ENCODE measurements at regions of chr12 and their contacts with region 1.

Region 1: DNA sequence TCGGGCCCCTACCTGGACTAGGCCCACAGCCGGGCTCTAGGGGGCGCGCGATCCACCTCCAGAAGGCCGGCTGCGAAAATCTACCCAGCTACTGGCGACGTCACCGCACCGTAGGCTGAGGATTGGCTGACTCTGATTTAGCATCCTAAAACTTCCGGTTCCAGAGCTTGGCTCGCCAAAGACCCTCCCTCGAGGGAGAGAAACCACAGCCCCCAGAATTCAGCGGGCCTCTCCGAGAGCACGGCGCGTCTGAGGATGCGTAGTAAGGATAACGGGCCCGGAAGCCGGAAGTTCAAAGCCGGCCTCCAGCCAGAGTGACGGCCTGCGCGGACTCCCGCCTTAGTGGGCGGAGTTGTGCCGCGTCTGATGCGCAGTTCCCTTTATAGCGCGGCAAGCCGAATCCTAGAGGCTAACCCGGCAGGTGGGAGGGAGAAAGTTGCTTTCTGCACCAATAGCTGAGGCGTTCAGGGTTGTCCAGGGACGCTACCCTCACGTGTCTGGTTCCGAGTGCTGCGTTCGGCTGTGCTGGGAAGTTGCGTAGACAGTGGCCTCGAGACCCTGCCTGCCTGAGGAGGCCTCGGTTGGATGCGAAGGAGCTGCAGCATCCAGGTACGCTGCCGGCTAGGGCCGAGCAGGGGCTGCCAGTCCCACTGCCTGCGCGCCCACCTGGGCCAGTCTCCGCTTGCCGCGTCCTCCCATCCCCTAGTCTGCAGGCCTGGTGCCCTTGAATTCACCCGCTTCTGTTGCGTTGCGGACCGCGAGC is at the start of gene COX14:
- DNase-seq: peak; percentile 98
- H3K4me3 ChIP-seq: peak within 1 kb of the TSS; percentile 74
- H3K27ac ChIP-seq: peak within 1 kb of the TSS; percentile 80
- H3K4me1 ChIP-seq: peaks cover 43% of the 10 kb centered on the region
- H3K27me3 ChIP-seq: no peaks in the 10 kb centered on the region
- CTCF ChIP-seq: peak; percentile 86; the same call in 1 of the 2 replicates
- total RNA-seq, gene COX14: 53.9 and 76.1 TPM in 2 replicates

Region 2: DNA sequence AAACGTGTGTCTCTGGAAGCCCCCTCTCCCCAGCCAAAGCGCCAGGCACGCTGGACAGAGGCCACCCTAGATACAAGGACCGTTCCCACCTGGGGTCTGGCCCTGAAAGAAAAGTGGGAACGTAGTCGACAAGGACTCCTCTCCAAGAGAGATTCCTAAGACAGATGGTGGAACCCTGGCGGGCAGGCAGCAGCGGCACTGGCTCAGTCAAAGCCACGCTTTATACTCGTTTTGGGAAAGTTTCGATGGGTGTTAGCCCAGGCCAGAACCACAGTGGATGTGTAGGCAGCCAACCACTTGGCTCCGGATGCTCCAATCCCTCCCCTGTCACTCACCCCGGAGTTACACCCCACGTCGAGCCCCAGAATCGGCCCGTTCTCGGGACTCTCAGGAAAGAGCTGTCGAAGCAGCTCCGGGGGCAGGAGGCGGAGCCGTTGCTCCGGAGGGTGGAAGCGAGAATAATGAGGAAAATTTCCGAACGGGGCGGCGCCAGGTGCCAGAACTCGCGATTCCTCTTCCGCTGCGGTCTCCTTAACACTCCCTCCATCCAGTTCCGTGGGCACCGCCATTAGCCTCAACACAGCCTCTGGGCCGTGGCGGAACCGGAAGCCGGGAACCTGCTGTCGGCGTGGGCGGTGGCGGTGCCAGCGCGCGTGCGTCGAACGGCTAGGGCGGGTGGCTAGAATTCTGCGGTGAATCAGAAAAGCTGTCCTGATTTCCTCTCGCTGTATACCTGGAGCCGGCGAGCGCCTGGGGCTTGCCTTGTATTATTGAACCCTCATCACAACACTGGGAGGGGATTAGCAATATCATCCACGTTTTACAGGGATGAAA is 269.1 kb before region 1 on chr12 and contains the start of gene BCDIN3D:
- CTCF ChIA-PET with region 1: no interaction called
- POLR2A ChIA-PET with region 1: interaction called, 3 read pairs
- intact Hi-C with region 1: loop called (anchors 1 kb)
- DNase-seq: peak; percentile 89 to 92
- H3K4me3 ChIP-seq: peak within 1 kb of the TSS; percentile 69
- H3K27ac ChIP-seq: peak within 1 kb of the TSS; percentile 77
- H3K4me1 ChIP-seq: peaks cover 21% of the 10 kb centered on the region
- H3K27me3 ChIP-seq: no peaks in the 10 kb centered on the region
- CTCF ChIP-seq: no peak
- total RNA-seq, gene BCDIN3D: 2.5 and 4.7 TPM in 2 replicates

Region 3: DNA sequence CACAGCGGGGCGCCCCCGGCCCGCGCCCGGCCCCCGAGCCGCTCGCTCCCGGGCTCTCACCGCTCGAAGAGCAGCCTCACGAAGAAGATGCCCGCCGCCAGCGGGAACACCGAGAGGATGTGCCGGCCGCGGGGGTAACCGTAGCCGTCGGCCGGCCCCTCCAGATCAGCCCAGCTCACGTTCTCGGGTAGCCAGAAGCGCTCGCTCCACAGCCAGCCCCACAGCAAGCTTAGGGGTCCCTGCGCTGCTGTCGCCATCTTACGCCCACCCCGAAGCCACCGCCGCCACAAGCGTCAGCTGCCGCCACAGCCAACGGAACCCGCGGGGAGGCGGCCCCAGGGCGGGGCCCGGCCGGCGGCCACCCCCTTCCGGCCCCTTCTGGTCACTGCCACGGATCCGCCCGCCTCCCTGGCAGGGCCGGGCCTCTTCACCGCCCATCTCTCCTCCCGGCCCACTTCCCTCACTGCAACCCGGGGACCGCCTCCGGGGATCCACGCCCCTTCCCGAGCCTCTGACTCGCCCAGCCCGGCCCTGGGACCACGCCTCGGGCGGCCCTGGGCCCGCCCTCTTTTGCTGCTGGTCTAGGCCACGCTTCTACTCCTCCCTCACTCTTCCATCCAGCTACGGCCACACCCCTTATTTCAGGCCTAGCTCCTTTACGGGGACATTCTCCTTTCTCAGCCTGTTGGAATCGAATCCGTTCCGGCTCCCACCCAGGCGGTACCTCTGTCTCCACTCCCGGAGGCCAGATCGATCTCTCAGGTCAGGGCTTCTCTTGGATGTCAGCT is 55.4 kb after region 1 on chr12 and contains the start of gene CERS5:
- CTCF ChIA-PET with region 1: interaction called, 5 read pairs
- POLR2A ChIA-PET with region 1: interaction called, 21 read pairs
- intact Hi-C with region 1: loop called (anchors 2 kb)
- DNase-seq: peak; percentile 92 to 99
- H3K4me3 ChIP-seq: peak within 1 kb of the TSS; percentile 100
- H3K27ac ChIP-seq: peak within 1 kb of the TSS; percentile 35
- H3K4me1 ChIP-seq: peaks cover 17% of the 10 kb centered on the region; the same call in 1 of the 2 replicates
- H3K27me3 ChIP-seq: no peaks in the 10 kb centered on the region
- CTCF ChIP-seq: peak; percentile 50; the same call in 1 of the 2 replicates
- total RNA-seq, gene CERS5: 33.0 and 41.7 TPM in 2 replicates

Region 4: DNA sequence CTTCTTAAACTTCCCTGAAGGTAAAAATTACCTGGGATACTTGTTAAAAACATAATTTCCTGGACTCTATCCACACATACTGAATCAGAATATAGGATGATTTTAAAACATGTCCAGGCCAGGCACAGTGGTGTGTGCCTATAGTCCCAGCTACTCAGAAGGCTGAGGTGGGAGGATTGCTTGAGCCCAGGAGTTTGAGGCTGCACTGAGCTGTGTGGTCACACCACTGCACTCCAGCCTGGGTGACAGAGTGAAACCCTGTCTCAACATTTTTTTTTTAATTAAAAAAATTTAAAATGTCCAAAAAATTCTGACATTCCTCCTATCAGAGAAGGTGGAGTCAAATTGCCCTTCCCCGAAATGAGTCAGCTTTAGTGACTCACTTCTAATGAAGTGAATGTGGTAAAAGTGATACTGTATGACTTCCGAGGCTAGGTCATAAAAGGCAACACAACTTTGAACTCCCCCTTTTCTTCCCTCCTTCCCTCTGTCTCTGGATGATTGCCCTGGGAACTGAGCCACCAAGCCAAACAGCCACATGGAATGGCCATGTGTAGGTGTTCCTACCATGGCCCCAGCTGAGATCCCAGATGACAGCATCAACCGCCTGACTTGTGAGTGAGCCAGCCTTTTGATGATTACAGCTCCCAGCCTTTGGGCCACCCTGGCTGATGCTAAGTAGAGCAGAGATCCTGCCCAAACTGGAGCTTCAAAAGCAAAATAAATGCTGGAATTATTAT is 135.2 kb after region 1 on chr12:
- CTCF ChIA-PET with region 1: interaction called, 4 read pairs
- POLR2A ChIA-PET with region 1: interaction called, 19 read pairs
- intact Hi-C with region 1: no loop called
- DNase-seq: peak; percentile 83 to 98
- H3K4me3 ChIP-seq: no peak overlapping the region
- H3K27ac ChIP-seq: peak overlapping the region; percentile 97
- H3K4me1 ChIP-seq: peaks cover 96% of the 10 kb centered on the region
- H3K27me3 ChIP-seq: no peaks in the 10 kb centered on the region
- CTCF ChIP-seq: 0 out of 2 replicates have a peak, but pooled peaks have one; percentile 13

Region 5: GRCh38 chr12:50390284-50390683 is 278.4 kb after region 1 on chr12:
- CTCF ChIA-PET with region 1: interaction called, 10 read pairs
- POLR2A ChIA-PET with region 1: interaction called, 3 read pairs
- intact Hi-C with region 1: no loop called
- DNase-seq: peak; percentile 33 to 96
- H3K4me3 ChIP-seq: no peak overlapping the region
- H3K27ac ChIP-seq: peak overlapping the region; percentile 64
- H3K4me1 ChIP-seq: peaks cover 37% of the 10 kb centered on the region
- H3K27me3 ChIP-seq: no peaks in the 10 kb centered on the region
- CTCF ChIP-seq: no peak

Measured in PC-9 (cell line).